Ovary (tissue), 10 donors: ENCODE measurements at regions of chr1 and their contacts with region 1.

Region 1: DNA sequence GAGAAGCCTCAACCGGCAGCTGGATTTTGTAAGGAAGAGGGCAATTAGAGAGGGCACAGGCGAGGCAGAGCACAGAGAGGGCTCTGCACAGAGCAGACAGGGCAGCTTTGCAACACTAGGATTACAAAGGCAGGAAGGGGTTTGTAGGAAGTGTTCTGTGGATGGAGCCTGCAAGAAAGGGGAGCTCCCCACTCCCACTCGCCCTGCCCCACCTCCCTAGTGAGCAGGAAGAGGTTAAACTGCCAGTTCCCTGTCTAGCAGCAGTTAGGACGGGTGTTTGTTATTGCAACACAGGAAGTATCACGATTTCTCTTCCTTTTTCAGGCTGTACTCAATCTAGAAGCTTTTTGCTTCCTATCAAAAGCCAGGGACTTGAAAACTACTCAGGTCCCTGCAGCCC is 63.3 kb upstream of the LRRC8D start:
- DNase-seq: no peak
- H3K4me3 ChIP-seq: no peak overlapping the region
- H3K27ac ChIP-seq: no peak overlapping the region
- H3K4me1 ChIP-seq: no peaks in the 10 kb centered on the region
- H3K27me3 ChIP-seq: no peaks in the 10 kb centered on the region
- CTCF ChIP-seq: no peak
- EP300 ChIP-seq: no peak
- POLR2A ChIP-seq: no peak

Region 2: DNA sequence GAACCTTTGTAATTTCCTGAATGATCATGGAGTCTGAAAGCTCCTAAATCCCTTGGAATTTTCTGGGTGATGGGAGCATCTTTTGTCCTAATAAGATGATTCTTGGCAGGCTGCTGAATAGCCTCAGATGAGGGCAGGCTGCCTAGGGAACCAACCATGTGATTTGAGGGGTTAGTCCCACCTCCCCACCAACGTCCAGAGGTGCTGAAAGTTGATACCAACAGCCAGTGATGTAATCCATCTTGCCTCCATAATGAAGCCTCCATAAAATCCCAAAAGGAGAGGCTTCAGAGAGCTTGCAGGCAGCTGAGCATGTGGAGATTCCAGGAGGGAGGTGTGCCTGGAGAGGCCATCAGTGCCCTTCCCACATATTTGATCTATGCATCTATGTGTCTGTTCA is 909.9 kb before region 1 on chr1:
- intact Hi-C with region 1: loop called in 1 of 4 experiments (anchors 5 kb)
- DNase-seq: no peak
- H3K4me3 ChIP-seq: no peak overlapping the region
- H3K27ac ChIP-seq: no peak overlapping the region
- H3K4me1 ChIP-seq: no peaks in the 10 kb centered on the region
- H3K27me3 ChIP-seq: no peaks in the 10 kb centered on the region
- CTCF ChIP-seq: no peak
- EP300 ChIP-seq: no peak
- POLR2A ChIP-seq: no peak

Region 3: GRCh38 chr1:89472952-89473351 is 284.6 kb before region 1 on chr1:
- intact Hi-C with region 1: loop called in 1 of 4 experiments (anchors 5 kb)
- DNase-seq: no peak
- H3K4me3 ChIP-seq: no peak overlapping the region
- H3K27ac ChIP-seq: no peak overlapping the region
- H3K4me1 ChIP-seq: no peaks in the 10 kb centered on the region
- H3K27me3 ChIP-seq: no peaks in the 10 kb centered on the region
- CTCF ChIP-seq: no peak
- EP300 ChIP-seq: no peak
- POLR2A ChIP-seq: no peak